OCI-LY7 (cell line): ENCODE measurements at regions of chr2 and their contacts with region 1.

Region 1: GRCh38 chr2:88582030-88582429 is 45.2 kb downstream of the EIF2AK3 start:
- DNase-seq: no peak
- H3K4me3 ChIP-seq: no peak overlapping the region
- H3K27ac ChIP-seq: no peak overlapping the region
- H3K4me1 ChIP-seq: no peaks in the 10 kb centered on the region
- CTCF ChIP-seq: no peak

Region 2: DNA sequence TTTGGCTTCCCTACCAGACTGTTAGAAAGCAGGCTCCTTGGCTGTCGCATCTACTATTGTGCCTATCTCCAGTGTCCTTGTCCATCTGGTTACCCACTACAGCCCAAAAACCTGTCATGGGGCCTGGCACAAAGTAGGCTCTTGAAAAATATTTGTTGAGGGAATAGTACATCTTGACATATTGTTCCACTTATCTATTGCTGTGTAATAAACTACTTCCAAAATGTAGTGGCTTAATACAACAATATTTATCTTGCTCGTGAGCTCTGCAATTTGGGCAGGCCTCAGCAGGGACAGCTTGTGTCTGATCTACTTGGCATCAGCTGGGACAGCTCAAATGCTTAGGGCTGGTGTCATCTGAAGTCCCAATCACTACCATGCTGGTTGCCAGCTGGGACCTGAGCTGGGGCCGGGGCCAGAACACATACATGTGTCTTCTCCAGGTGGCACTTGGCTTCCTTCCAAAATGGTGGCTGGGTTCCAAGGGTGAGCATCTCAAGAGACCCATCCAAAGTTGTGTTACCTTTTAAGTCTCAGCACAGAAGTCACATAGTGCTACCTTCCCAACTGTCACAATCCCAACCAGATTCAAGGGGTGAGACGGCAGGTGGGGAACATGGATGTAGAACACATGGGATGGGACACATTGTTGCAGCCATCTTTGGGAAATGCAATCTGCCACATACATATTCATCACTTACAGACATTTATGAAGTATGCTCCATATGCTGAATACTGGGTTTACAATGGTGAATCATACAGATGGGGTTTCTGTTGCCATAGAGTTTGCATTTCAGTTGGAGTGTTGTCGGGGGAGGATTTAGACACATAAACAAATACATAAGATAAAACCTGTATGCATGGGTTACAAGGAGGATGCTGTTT is 263.7 kb before region 1 on chr2:
- CTCF ChIA-PET with region 1: no interaction called
- POLR2A ChIA-PET with region 1: no interaction called
- intact Hi-C with region 1: no loop called
- DNase-seq: no peak
- H3K4me3 ChIP-seq: no peak overlapping the region
- H3K27ac ChIP-seq: no peak overlapping the region
- H3K4me1 ChIP-seq: no peaks in the 10 kb centered on the region
- CTCF ChIP-seq: no peak

Region 3: DNA sequence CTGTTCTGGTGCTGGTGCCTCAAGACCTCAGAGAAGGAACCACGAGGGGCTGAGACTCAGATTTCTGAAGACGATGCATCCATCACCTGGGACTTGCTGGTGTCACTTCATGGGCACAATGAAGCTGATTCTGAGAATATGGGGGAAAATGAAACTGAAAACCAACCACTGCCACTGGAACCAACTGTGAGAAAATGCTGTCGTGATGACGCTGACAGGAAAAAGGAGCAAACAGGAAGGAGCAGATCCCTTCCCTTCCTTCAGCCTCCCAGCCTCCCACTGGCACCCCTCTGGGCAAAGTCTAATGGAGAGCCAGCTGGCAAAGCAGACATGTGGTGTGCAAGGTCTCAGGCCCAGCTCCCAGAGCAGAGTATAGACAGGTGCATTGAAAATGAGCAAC is 239.3 kb before region 1 on chr2:
- CTCF ChIA-PET with region 1: no interaction called
- POLR2A ChIA-PET with region 1: no interaction called
- intact Hi-C with region 1: no loop called
- DNase-seq: no peak
- H3K4me3 ChIP-seq: no peak overlapping the region
- H3K27ac ChIP-seq: no peak overlapping the region
- H3K4me1 ChIP-seq: no peaks in the 10 kb centered on the region
- CTCF ChIP-seq: no peak

Region 4: DNA sequence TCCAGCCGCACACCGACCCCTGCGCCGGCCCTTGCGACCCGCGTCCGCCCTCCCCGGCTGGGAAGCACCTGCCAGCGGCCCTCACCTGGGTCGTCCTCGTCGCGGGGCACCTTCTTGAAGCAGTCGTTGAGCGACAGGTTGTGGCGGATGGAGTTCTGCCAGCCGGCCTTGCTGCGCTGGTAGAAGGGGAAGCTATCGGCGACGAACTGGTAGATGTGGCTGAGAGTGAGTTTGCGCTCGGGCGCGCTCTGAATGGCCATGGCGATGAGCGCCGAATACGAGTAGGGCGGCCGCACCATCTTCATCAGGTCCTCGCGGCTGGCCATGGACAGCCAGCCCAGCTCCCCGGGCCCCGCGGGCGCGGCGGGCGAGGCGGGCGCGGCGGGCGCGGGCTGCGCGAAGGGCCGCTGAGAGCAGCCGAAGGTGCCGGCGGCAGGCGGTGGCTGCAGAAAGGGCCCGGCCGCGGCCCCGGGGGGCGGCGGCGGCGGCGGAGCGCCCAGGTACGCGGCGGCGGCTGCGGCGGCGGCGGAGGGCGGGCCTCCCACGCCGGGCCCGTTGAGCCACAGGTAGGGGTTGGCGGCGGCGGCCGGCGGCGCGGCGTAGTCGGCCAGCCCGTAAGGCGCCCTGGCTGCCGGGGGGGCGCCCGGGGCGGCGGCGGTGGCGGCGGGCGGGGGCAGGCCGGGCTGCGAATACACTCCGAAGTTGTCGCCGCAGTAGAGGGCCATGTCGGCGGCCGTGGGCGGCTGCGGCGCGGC is 130.0 kb before region 1 on chr2:
- CTCF ChIA-PET with region 1: no interaction called
- POLR2A ChIA-PET with region 1: no interaction called
- intact Hi-C with region 1: no loop called
- DNase-seq: no peak
- H3K4me3 ChIP-seq: no peak overlapping the region
- H3K27ac ChIP-seq: no peak overlapping the region
- H3K4me1 ChIP-seq: no peaks in the 10 kb centered on the region
- CTCF ChIP-seq: no peak

Region 5: GRCh38 chr2:88561646-88562388 is 20.2 kb before region 1 on chr2:
- CTCF ChIA-PET with region 1: no interaction called
- POLR2A ChIA-PET with region 1: interaction called, 7 read pairs
- intact Hi-C with region 1: loop called (anchors 2 kb)
- DNase-seq: no peak
- H3K4me3 ChIP-seq: no peak overlapping the region
- H3K27ac ChIP-seq: no peak overlapping the region
- H3K4me1 ChIP-seq: no peaks in the 10 kb centered on the region
- CTCF ChIP-seq: no peak